K562 (cell line): ENCODE measurements at regions of chr21 and their contacts with region 1.

Region 1: DNA sequence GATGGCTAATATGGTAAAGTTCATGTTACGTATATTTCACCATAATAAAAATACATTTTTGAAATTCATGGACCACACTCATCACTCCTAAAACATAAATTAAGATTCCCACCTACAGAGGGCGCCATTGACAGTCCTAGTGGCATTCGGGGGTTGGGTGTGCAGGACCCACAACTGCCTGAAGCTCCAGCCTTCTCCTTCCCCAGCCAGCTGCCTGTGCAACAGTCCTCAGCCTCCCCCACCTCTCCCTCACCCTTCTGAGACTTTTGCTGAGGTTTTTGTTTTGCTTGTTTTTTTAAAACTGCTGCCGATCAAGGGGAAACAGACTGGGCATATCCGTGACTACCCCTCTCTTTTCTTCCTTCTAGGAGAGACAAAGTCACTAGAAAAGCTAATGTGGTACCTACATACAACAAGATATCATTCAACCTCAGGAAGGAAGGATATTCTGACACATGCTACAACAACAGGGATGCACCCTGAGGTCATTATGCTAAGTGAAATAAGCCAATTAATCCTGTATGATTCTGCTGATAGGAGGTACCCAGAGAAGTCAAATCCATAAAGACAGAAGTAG is 9.2 kb upstream of the EVA1C start:
- DNase-seq: peak; percentile 70 to 86 (median 78)
- ATAC-seq: peak; percentile 93
- H3K4me3 ChIP-seq: no peak overlapping the region
- H3K27ac ChIP-seq: no peak overlapping the region
- H3K4me1 ChIP-seq: peaks cover 0 to 2% of the 10 kb centered on the region in 2 experiments; a peak in 1 of 5 replicates
- H3K27me3 ChIP-seq: peaks cover 12 to 33% of the 10 kb centered on the region in 2 experiments
- CTCF ChIP-seq: peak; percentile 84 to 91 (median 88)
- EP300 ChIP-seq: no peak
- POLR2A ChIP-seq: no peak
- RAD21 ChIP-seq: peak; percentile 78 to 90

Region 2: DNA sequence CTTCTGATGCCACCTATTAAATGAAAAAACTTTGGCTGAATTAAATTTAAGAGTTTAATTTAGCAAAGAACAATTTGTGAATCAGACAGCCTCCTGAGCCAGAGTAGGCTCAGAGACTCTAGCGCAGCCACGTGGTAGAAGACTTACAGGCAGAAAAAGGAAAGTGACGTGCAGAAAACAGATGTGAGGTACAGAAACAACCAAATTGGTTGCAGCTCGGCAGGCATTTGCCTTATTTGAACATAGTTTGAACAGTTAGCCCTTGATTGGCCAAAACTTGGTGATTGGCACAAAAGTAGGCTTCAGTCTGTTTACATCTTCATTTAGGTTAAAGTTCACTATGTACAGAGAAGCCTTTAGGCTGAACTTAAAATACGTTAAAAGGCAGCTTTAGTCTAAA is 159.1 kb after region 1 on chr21:
- CTCF ChIA-PET with region 1: interaction called, 8 read pairs
- POLR2A ChIA-PET with region 1: no interaction called
- in situ Hi-C with region 1: no loop called
- intact Hi-C with region 1: loop called (anchors 1 kb)
- DNase-seq: peak in 1 of 4 experiments; percentile 73
- ATAC-seq: peak; percentile 87
- H3K4me3 ChIP-seq: no peak overlapping the region
- H3K27ac ChIP-seq: no peak overlapping the region
- H3K4me1 ChIP-seq: peaks cover 3% of the 10 kb centered on the region in 2 experiments; a peak in 4 of 5 replicates
- H3K27me3 ChIP-seq: no peaks in the 10 kb centered on the region
- CTCF ChIP-seq: peak; percentile 73 to 85 (median 76)
- EP300 ChIP-seq: peak; percentile 25
- POLR2A ChIP-seq: no peak
- RAD21 ChIP-seq: peak; percentile 79 to 89

Region 3: GRCh38 chr21:32569261-32570230 is 166.3 kb after region 1 on chr21:
- CTCF ChIA-PET with region 1: interaction called, 6 read pairs
- POLR2A ChIA-PET with region 1: interaction called, 3 read pairs
- in situ Hi-C with region 1: loop called (anchors 5 kb)
- intact Hi-C with region 1: no loop called
- DNase-seq: peak; percentile 77 to 91 (median 80)
- ATAC-seq: peak; percentile 95
- H3K4me3 ChIP-seq: peak overlapping the region; percentile 56
- H3K27ac ChIP-seq: peak overlapping the region; percentile 42; the same call in 2 of the 3 replicates
- H3K4me1 ChIP-seq: peaks cover 16 to 20% of the 10 kb centered on the region in 2 experiments; a peak in 4 of 5 replicates
- H3K27me3 ChIP-seq: peaks cover 5 to 13% of the 10 kb centered on the region in 2 experiments; a peak in 4 of 5 replicates
- CTCF ChIP-seq: peak; percentile 89 to 98 (median 90)
- EP300 ChIP-seq: peak; percentile 13; the same call in 1 of the 2 replicates
- POLR2A ChIP-seq: no peak
- RAD21 ChIP-seq: peak; percentile 37 to 75

Region 4: GRCh38 chr21:32597205-32597604 is 193.9 kb after region 1 on chr21:
- CTCF ChIA-PET with region 1: interaction called, 11 read pairs
- POLR2A ChIA-PET with region 1: interaction called, 7 read pairs
- in situ Hi-C with region 1: loop called (anchors 5 kb)
- intact Hi-C with region 1: loop called (anchors 1 kb)
- DNase-seq: no peak
- ATAC-seq: no peak
- H3K4me3 ChIP-seq: no peak overlapping the region
- H3K27ac ChIP-seq: no peak overlapping the region
- H3K4me1 ChIP-seq: no peaks in the 10 kb centered on the region
- H3K27me3 ChIP-seq: no peaks in the 10 kb centered on the region
- CTCF ChIP-seq: no peak
- EP300 ChIP-seq: no peak
- POLR2A ChIP-seq: no peak
- RAD21 ChIP-seq: no peak

Region 5: GRCh38 chr21:32604464-32604863 is 201.2 kb after region 1 on chr21:
- CTCF ChIA-PET with region 1: interaction called, 11 read pairs
- POLR2A ChIA-PET with region 1: interaction called, 7 read pairs
- in situ Hi-C with region 1: loop called (anchors 5 kb)
- intact Hi-C with region 1: loop called (anchors 1 kb)
- DNase-seq: no peak
- ATAC-seq: no peak
- H3K4me3 ChIP-seq: no peak overlapping the region
- H3K27ac ChIP-seq: no peak overlapping the region
- H3K4me1 ChIP-seq: peaks cover 3 to 6% of the 10 kb centered on the region in 2 experiments; a peak in 3 of 5 replicates
- H3K27me3 ChIP-seq: no peaks in the 10 kb centered on the region
- CTCF ChIP-seq: no peak
- EP300 ChIP-seq: no peak
- POLR2A ChIP-seq: no peak
- RAD21 ChIP-seq: no peak

Region 6: DNA sequence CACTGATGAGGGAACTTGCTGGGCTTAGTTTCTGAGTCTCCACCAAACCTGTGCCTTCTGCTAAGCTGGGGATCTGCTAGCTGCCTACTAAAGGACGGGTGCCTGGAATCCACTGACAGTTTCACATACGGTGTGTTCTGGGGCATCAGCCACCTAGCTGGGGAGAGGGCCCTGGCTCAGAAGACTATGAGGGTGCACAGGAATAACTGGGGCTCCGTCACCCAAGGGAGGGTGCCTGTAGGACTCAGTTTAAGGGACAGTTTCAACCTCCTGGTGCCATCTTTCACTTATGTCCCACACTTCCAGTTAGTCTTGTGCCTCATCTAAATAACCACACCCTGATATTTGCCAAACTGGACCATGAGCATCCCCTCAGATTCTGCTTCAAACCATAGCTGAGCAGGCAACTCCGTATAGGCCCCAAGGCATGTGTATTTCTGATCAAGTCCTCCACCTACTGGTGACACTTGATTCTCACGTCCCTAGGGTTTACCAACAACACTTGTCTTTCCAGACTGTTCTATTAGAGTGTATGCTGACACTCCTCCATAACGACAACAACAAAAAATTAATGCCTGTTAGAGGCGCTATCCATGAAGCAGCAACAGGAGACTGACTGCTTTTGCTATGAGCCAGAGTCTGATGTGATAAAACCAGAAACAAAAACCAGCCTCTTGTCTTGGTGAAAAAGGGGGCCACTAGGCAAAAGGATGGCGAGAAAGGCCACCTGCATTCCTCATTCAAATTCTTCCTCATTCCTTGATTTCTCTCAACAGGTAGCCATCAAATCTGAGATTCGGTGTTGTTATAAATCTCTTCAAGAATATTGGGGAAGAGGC is 423.3 kb after region 1 on chr21:
- CTCF ChIA-PET with region 1: interaction called, 5 read pairs
- POLR2A ChIA-PET with region 1: no interaction called
- in situ Hi-C with region 1: no loop called
- intact Hi-C with region 1: loop called (anchors 5 kb)
- DNase-seq: peak; percentile 36 to 73 (median 52)
- ATAC-seq: peak; percentile 100
- H3K4me3 ChIP-seq: no peak overlapping the region
- H3K27ac ChIP-seq: no peak overlapping the region
- H3K4me1 ChIP-seq: no peaks in the 10 kb centered on the region
- H3K27me3 ChIP-seq: peaks cover 4 to 9% of the 10 kb centered on the region in 2 experiments; a peak in 4 of 5 replicates
- CTCF ChIP-seq: peak; percentile 71 to 88 (median 72)
- EP300 ChIP-seq: no peak
- POLR2A ChIP-seq: no peak
- RAD21 ChIP-seq: peak; percentile 75 to 95